Endothelial cell of umbilical vein (primary cell): ENCODE measurements at regions of chr11 and their contacts with region 1.

Region 1: GRCh38 chr11:22304337-22304961 is 33.7 kb upstream of the SLC17A6 start:
- DNase-seq: peak; percentile 34
- H3K4me3 ChIP-seq: no peak overlapping the region
- H3K27ac ChIP-seq: no peak overlapping the region
- H3K4me1 ChIP-seq: no peaks in the 10 kb centered on the region
- H3K27me3 ChIP-seq: peaks cover 0 to 12% of the 10 kb centered on the region in 2 experiments
- CTCF ChIP-seq: peak; percentile 19 to 39
- POLR2A ChIP-seq: no peak

Region 2: GRCh38 chr11:20647976-20648565 is 1656.4 kb before region 1 on chr11:
- CTCF ChIA-PET with region 1: interaction called, 26 read pairs
- POLR2A ChIA-PET with region 1: no interaction called
- dilution Hi-C with region 1: no loop called
- intact Hi-C with region 1: loop called (anchors 1 kb)
- DNase-seq: peak; percentile 55
- H3K4me3 ChIP-seq: no peak overlapping the region
- H3K27ac ChIP-seq: no peak overlapping the region
- H3K4me1 ChIP-seq: no peaks in the 10 kb centered on the region
- H3K27me3 ChIP-seq: no peaks in the 10 kb centered on the region
- CTCF ChIP-seq: peak; percentile 67 to 78
- POLR2A ChIP-seq: no peak

Region 3: DNA sequence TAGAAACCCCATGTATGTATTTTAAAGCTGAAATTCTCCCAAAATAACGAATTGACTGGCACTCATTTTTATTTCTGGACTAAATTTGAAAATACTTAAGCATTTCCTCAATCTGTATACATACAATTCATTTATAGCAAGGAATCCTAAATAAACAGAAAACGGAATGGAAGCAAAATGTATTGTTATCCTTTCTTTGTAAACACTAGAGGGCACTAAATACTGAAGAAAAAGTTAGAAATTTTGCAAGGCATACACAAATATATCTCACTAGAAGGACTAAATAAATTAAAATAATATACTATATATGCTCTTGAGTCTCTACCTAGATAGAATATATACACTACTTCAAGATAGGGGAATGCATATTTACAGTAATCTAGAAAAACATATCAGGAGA is 134.6 kb before region 1 on chr11:
- CTCF ChIA-PET with region 1: interaction called, 22 read pairs
- POLR2A ChIA-PET with region 1: no interaction called
- dilution Hi-C with region 1: no loop called
- intact Hi-C with region 1: loop called (anchors 1 kb)
- DNase-seq: no peak
- H3K4me3 ChIP-seq: no peak overlapping the region
- H3K27ac ChIP-seq: no peak overlapping the region
- H3K4me1 ChIP-seq: no peaks in the 10 kb centered on the region
- H3K27me3 ChIP-seq: no peaks in the 10 kb centered on the region
- CTCF ChIP-seq: peak in 1 of 2 donors; percentile 4
- POLR2A ChIP-seq: no peak

Region 4: GRCh38 chr11:22244986-22245592 is 59.4 kb before region 1 on chr11:
- CTCF ChIA-PET with region 1: interaction called, 18 read pairs
- POLR2A ChIA-PET with region 1: no interaction called
- dilution Hi-C with region 1: no loop called
- intact Hi-C with region 1: loop called (anchors 1 kb)
- DNase-seq: peak; percentile 36
- H3K4me3 ChIP-seq: no peak overlapping the region
- H3K27ac ChIP-seq: no peak overlapping the region
- H3K4me1 ChIP-seq: no peaks in the 10 kb centered on the region
- H3K27me3 ChIP-seq: no peaks in the 10 kb centered on the region
- CTCF ChIP-seq: peak; percentile 46 to 63
- POLR2A ChIP-seq: no peak